Dorsolateral prefrontal cortex (tissue), 120 donors: ENCODE measurements at regions of chr7 and their contacts with region 1.

Region 1: DNA sequence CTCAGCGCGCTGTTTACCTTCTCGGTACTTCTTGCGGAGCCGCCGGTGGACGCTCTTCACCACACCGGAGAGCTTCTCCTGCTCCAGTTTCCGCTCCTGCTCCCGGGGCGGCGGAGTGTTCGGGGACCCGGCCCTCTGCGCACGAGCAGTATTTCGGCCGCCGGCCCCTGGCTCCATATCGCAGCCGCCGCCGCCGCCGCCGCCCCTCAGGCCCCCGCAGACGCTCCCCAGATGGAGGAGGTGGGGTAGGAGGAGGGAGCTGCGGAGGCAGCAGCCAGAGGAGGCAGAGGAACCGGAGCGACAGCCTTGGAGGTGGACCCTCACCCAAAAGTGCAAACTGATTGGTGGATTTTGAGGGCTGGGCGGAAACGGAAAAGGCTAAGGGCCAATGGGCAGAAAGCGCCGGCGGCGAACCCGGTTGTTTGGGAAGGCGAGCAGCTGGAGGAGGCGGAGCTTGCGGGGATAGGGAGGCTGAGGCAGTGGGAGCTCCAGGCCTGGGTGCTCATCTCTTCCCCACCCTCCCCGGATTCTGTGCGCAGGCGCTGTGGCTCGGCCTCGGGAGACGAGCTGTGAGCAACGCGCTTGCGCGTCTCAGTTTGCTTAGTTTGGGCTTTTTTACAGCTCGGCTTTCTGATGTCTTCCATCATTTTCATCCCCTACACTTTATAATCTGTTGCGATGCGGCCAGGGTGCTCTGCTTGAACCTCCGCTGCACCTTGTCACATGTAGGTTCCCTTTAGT is 146.9 kb downstream of the GPR85 start:
- DNase-seq: peak; percentile 97 to 100 (median 99)
- H3K4me3 ChIP-seq: peak overlapping the region; percentile 61 to 97 (median 89)
- H3K27ac ChIP-seq: peak overlapping the region in 58 of 59 donors; percentile 46 to 94 (median 86)
- H3K27me3 ChIP-seq: no peaks in the 10 kb centered on the region
- CTCF ChIP-seq: peak in 20 of 56 donors; percentile 10 to 45 (median 24)

Region 2: DNA sequence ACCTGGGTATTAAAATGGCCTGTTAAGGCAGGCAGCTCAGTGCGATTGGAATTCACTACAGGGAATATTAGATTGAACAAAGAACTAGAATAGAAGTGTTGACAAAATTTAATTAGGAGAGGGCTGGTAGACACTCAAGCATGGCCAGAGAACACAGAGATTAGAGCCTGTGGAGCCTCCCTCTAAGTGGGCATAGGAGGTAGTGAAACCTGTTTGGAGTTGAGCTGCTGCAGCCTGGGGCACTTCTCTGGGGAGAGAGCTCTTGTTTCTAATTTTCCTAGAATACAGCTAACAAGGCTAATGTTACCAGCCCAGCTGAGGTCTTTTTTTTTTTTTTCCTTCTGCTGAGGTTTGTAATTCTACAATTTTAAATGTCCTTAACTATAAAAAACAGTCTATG is 195.9 kb before region 1 on chr7:
- intact Hi-C with region 1: no loop called
- DNase-seq: no peak
- H3K4me3 ChIP-seq: no peak overlapping the region
- H3K27ac ChIP-seq: no peak overlapping the region
- H3K27me3 ChIP-seq: no peaks in the 10 kb centered on the region
- CTCF ChIP-seq: no peak

Region 3: DNA sequence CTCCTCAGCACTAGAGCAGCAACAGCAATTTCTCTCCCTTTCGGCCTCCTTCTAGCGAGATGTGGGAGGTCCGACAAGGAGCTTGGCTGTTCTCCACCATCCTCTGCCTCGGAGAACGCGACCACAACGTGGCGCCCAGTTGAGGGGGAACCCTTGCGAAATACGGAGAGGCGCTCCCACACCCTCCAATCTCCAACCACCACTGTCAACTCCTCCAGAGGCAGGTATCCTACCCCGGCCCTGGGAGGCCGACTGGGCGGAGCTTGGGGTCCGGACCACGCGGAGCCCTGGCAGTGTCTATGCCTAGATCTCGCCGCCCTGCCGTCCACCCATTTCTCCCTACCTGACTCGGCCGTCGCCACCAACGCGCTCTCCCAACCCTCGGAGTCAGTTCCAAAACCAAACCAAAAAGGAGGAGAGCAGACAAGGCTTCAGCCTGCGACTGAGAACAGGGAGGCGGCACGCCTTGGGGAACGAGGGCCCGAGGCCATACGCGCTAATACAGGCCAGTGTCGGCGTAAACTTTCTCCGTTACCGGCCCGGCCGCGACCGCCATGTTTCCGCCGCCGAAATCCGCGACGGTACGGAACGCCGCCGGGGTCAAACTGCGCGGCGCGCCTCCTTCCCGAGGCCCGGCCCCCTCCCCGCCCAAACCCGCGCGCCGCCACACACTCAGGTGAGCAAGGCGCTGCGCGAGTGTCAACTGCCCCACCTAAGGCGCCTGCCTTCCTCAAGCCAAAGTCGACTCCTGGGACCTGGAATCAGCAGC is 149.7 kb before region 1 on chr7 and contains the start of gene TMEM168:
- intact Hi-C with region 1: loop called (anchors 5 to 10 kb)
- DNase-seq: peak; percentile 51 to 84 (median 64)
- H3K4me3 ChIP-seq: peak within 1 kb of the TSS; percentile 62 to 96 (median 85)
- H3K27ac ChIP-seq: peak within 1 kb of the TSS in 57 of 59 donors; percentile 10 to 94 (median 80)
- H3K27me3 ChIP-seq: no peaks in the 10 kb centered on the region
- CTCF ChIP-seq: peak in 21 of 56 donors; percentile 3 to 42 (median 17)
- total RNA-seq, gene TMEM168: 10.8 to 25.4 (median 17.3) TPM

Region 4: GRCh38 chr7:112869111-112869757 is 70.5 kb before region 1 on chr7:
- intact Hi-C with region 1: no loop called
- DNase-seq: no peak
- H3K4me3 ChIP-seq: no peak overlapping the region
- H3K27ac ChIP-seq: no peak overlapping the region
- H3K27me3 ChIP-seq: no peaks in the 10 kb centered on the region
- CTCF ChIP-seq: peak in 50 of 56 donors; percentile 25 to 61 (median 42)

Region 5: DNA sequence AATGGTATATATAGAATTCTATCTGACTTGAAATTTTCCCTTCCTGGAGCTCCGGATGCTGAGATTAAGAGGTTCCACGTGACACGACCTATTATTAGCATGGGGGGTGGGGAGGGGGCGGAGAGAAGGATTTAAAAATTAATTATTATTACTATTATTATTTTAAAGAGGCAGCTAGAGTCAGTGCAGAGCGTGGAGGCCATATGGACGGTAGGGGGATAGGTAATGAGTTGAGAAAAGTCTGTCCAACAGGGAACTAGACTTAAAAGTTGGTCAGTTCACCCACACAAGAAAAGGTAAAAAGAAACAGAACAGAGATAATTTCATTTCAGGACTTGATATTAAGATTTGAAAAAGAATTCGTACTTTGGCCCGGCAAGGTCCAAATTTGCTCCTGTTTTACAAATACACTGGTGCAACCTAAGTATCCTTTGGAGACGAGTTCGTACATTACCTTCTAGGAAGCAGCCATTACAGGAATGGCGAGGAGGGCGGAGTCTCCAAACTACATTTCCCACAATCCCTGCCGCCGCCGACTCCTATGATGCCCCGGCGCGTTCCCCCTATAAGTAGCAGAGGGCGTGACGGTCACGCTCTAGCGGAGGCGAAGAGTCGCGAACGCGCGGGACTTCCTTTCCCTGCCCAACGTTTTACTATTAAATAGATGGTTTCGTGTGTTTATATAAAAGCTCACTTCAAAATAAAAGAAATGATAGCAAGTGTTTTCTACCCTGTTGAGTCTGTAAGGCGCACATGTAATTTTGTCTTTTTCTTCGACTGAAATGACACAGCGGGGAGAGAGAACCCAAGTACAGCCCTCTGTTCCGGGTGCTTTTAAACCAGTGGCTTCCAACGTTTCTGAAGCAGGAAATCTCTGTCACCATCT is 178.6 kb after region 1 on chr7 and contains the start of gene SMIM30:
- intact Hi-C with region 1: loop called in 1 of 2 experiments (anchors 10 kb)
- DNase-seq: peak; percentile 82 to 96 (median 94)
- H3K4me3 ChIP-seq: peak within 1 kb of the TSS; percentile 45 to 85 (median 71)
- H3K27ac ChIP-seq: peak within 1 kb of the TSS in 53 of 59 donors; percentile 7 to 89 (median 74)
- H3K27me3 ChIP-seq: no peaks in the 10 kb centered on the region
- CTCF ChIP-seq: peak in 29 of 56 donors; percentile 8 to 56 (median 33)
- total RNA-seq, gene SMIM30: 13.4 to 37.6 (median 21.0) TPM

Region 6: GRCh38 chr7:113267271-113267670 is 327.5 kb after region 1 on chr7:
- intact Hi-C with region 1: no loop called
- DNase-seq: no peak
- H3K4me3 ChIP-seq: no peak overlapping the region
- H3K27ac ChIP-seq: no peak overlapping the region
- H3K27me3 ChIP-seq: no peaks in the 10 kb centered on the region
- CTCF ChIP-seq: no peak